GM10248 (cell line): ENCODE measurements at regions of chr2 and their contacts with region 1.

Region 1: GRCh38 chr2:174634130-174635014 is 36.8 kb upstream of the WIPF1 start:
- DNase-seq: peak; percentile 49
- CTCF ChIP-seq: peak; percentile 35

Region 2: GRCh38 chr2:174593574-174594203 is 40.7 kb before region 1 on chr2:
- CTCF ChIA-PET with region 1: interaction called, 13 read pairs
- POLR2A ChIA-PET with region 1: interaction called, 3 read pairs
- DNase-seq: peak; percentile 50
- CTCF ChIP-seq: no peak

Region 3: DNA sequence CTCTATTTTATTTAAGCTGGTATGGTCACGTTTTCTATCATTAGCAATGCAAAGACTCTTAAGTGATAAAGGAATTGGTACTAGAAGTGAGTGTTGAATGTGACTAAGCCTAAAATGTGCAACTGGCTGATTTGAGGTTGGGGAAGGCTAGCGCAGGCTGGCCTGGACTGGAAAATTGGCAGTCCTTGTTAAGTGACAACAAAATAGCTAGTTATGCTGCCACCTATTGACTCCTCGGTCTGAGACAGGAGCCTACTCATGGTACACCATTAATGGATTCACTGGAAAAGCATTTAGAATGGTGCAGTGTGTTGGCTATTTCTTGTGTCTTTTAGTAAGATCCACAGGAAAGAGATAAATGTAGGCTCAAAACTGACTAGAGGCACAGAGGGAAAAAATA is 31.1 kb before region 1 on chr2:
- CTCF ChIA-PET with region 1: interaction called, 15 read pairs
- POLR2A ChIA-PET with region 1: no interaction called
- DNase-seq: peak; percentile 35
- CTCF ChIP-seq: peak; percentile 60

Region 4: DNA sequence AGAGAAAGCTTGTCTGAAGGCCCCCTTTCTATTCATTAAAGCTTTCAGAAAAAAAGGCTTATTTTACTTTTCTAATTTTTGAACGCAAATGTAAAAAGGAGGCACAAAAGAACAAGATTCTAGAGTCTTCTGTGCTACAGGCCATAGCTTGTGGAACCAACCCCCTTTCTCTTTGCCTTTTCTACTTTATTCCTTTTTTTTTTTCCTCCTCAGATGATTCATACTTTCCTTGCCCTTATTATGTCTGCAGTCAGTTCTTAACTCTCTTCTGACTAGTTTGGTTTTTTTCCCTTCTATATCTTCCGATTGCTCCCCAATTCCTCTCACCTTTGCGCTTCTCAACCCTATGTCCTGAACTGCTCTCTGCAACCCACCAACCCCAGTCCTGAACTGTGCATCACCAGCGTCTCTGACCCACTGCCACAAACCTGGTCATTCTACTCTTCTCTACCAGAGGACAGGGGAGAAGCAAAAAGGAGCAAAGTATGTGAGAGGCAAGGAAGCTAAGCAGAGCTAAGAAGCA is 20.1 kb after region 1 on chr2:
- CTCF ChIA-PET with region 1: interaction called, 10 read pairs
- POLR2A ChIA-PET with region 1: no interaction called
- DNase-seq: no peak
- CTCF ChIP-seq: no peak